B cell (primary cell): ENCODE measurements at regions of chr14 and their contacts with region 1.

Region 1: DNA sequence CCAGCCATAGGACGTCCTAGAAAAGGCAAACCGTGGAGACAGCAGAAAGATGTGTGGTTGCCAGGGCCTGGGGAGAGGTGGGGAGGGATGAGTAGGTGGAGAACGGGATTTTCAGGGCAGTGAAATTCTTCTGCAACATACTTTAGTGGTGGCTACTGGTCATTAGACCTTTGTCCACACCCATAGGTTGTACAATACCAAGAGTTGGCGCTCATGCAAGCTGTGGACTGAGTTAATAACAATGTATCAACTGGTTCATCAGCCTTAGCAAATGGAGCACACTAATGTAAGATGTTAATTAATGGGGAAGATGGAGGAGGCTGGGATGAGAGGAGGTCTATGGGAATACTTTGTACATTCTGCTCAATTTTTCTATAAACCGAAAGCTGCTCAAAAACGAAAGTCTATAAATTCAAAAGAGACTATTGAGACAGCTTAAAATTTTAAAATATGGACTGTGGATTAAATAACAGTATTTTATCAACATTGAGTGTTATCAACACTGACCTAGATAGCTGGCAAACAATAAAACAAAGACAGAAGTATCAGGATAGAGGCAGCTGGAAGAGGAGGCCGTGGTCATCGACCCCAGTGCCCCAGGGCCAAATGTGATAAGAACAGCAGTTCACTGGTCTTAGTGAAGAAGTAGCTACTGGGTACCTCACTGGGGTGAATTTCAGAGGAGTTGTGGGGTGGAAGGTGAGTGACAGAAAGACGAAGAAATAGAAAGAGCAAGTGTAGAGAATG is 90.9 kb downstream of the SYNE3 start:
- DNase-seq: no peak
- ATAC-seq: no peak
- H3K4me3 ChIP-seq: no peak overlapping the region
- H3K4me3 Mint-ChIP-seq: no peak overlapping the region
- H3K27ac ChIP-seq: no peak overlapping the region
- H3K27ac Mint-ChIP-seq: no peak overlapping the region
- H3K4me1 ChIP-seq: no peaks in the 10 kb centered on the region
- H3K4me1 Mint-ChIP-seq: peaks cover 7% of the 10 kb centered on the region
- H3K27me3 ChIP-seq: no peaks in the 10 kb centered on the region
- H3K27me3 Mint-ChIP-seq: no peaks in the 10 kb centered on the region
- CTCF ChIP-seq: no peak

Region 2: DNA sequence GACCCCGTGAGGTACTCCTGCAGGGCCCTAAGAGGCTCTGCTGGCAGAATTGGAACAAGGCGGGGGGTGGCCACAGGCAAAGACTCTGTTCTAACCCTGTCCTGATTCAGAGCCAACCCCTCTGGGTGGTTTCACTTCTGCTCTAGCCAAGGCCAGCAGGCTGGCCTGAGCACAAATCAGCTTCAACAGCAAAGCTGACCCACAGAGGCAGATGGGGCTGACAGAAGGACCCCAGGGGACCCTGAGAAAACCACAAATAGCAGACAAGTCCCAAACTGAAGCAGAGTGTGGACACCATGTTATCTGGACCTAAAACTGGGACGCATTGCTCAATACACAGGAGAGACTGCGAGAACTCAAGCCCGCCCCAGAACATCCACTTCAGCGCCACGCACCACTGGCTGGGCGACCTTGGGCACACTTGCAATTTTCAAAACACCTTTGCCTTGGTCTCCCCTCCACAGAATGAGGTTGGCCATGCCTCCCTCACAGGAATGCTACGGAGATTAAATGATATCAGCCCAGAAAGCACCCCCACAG is 191.8 kb before region 1 on chr14:
- CTCF ChIA-PET with region 1: no interaction called
- POLR2A ChIA-PET with region 1: no interaction called
- intact Hi-C with region 1: no loop called
- DNase-seq: peak; percentile 24
- ATAC-seq: peak; percentile 78
- H3K4me3 ChIP-seq: no peak overlapping the region
- H3K4me3 Mint-ChIP-seq: peak overlapping the region; percentile 54
- H3K27ac ChIP-seq: no peak overlapping the region
- H3K27ac Mint-ChIP-seq: peak overlapping the region; percentile 43
- H3K4me1 ChIP-seq: peaks cover 13 to 14% of the 10 kb centered on the region in 2 donors
- H3K4me1 Mint-ChIP-seq: peaks cover 24% of the 10 kb centered on the region
- H3K27me3 ChIP-seq: no peaks in the 10 kb centered on the region
- H3K27me3 Mint-ChIP-seq: peaks cover 3% of the 10 kb centered on the region
- CTCF ChIP-seq: no peak

Region 3: GRCh38 chr14:95340201-95340697 is 85.3 kb before region 1 on chr14:
- CTCF ChIA-PET with region 1: no interaction called
- POLR2A ChIA-PET with region 1: no interaction called
- intact Hi-C with region 1: no loop called
- DNase-seq: no peak
- ATAC-seq: no peak
- H3K4me3 ChIP-seq: no peak overlapping the region
- H3K4me3 Mint-ChIP-seq: no peak overlapping the region
- H3K27ac ChIP-seq: no peak overlapping the region
- H3K27ac Mint-ChIP-seq: no peak overlapping the region
- H3K4me1 ChIP-seq: no peaks in the 10 kb centered on the region
- H3K4me1 Mint-ChIP-seq: no peaks in the 10 kb centered on the region
- H3K27me3 ChIP-seq: peaks cover 0 to 14% (median 2%) of the 10 kb centered on the region in 4 experiments
- H3K27me3 Mint-ChIP-seq: peaks cover 33% of the 10 kb centered on the region
- CTCF ChIP-seq: no peak

Region 4: GRCh38 chr14:95483309-95484165 is 58.0 kb after region 1 on chr14:
- CTCF ChIA-PET with region 1: interaction called, 12 read pairs
- POLR2A ChIA-PET with region 1: no interaction called
- intact Hi-C with region 1: no loop called
- DNase-seq: no peak
- ATAC-seq: no peak
- H3K4me3 ChIP-seq: no peak overlapping the region
- H3K4me3 Mint-ChIP-seq: no peak overlapping the region
- H3K27ac ChIP-seq: no peak overlapping the region
- H3K27ac Mint-ChIP-seq: peak overlapping the region; percentile 59
- H3K4me1 ChIP-seq: peaks cover 64 to 87% of the 10 kb centered on the region in 2 donors
- H3K4me1 Mint-ChIP-seq: peaks cover 80% of the 10 kb centered on the region
- H3K27me3 ChIP-seq: no peaks in the 10 kb centered on the region
- H3K27me3 Mint-ChIP-seq: no peaks in the 10 kb centered on the region
- CTCF ChIP-seq: no peak